ENCODE measurements at regions of chr5 and their contacts with region 1.

Region 1: GRCh38 chr5:113068559-113068958 is 92.0 kb downstream of the DCP2 start:
- DNase-seq: no peak
- H3K4me3 ChIP-seq: no peak overlapping the region
- H3K27ac ChIP-seq: no peak overlapping the region
- H3K4me1 ChIP-seq: no peaks in the 10 kb centered on the region
- H3K27me3 ChIP-seq: no peaks in the 10 kb centered on the region
- CTCF ChIP-seq: no peak

Region 2: DNA sequence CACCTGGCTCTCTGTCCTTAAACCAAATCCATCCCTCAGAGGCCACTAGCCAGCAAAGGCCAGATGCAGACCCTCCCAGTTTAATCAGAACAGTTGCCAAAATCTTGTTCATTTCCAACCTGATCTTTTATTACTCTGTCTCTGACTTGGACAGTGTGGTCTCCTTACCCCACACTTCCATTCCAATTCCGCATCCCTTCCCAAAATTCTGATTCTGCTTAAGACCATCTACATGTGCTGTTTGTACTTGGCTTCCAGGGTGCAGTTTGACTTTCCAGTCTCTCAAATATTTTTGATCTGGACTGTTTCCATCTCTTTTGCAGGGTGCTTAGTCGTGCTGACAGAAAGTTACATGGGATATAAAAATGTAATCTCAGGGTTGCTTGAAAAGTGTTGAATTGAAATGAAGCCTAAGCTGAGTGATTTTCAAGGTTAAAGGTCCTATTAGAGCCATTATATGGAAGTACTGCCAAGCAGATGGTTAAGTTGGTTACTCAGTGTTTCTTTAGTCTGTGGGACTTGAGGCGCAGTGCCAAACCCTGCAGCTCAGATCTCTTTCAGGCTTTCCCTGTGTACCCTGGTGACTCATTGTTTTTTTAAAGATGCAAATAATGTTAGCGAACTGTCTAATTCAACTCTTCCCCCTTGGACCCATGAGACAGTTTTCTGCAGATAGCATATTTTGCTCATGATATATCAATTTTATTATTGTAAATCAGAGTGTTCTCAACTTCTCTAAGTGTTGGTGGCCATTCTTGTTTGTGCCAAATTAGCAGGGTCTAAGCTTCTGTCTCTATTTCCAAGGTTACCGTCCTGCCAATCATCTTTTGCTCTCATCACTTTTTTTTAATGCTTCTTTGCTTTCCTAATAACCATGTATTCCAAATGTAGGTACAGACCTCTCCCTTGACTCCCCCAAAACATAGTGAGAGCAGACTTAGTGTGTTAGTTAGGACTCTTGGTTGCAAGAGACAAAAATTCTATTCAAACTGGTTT is 110.2 kb before region 1 on chr5:
- CTCF ChIA-PET with region 1: no interaction called
- POLR2A ChIA-PET with region 1: no interaction called
- intact Hi-C with region 1: no loop called
- DNase-seq: peak; percentile 66 to 93
- H3K4me3 ChIP-seq: no peak overlapping the region
- H3K27ac ChIP-seq: peak overlapping the region; percentile 63
- H3K4me1 ChIP-seq: peaks cover 46% of the 10 kb centered on the region
- H3K27me3 ChIP-seq: no peaks in the 10 kb centered on the region
- CTCF ChIP-seq: no peak

Region 3: DNA sequence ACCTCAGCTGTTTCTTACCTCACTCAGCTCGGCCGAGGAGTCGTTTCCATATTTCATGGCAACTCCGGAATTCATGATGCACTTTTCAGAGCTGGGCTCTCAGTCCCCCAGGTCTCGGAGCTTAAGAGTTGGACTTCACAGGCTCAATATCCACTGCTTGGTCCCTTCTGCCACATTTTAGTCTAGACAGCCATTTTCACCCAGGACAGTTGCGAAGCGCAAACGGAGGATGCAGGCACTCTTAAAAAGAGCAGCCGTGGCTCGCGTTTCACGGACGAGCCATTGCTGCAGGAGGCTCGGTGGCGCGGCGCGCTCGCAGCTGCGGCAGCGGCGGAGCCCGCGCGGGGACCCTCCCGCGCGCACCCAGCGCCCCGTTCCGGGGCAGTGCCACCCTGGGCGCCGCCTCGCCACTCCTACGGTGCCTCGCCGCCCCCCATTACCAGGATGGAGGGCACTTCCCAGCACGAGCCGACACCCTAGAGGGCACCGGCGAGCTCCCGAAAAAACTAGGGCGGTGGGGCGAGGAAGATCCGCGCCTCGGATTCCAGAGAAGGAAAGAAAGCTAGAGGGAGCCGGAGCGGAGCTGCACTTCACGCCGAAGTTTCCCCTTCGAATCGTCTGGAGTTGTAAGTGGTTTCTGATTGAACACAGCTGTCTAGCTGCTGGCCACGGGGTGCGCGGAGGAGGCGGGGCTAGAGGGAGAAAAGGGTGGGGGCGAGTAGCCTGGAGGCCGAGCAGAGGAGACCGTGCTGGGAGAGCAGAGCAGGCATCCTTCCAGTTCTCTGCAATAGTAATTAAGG is 226.0 kb after region 1 on chr5:
- CTCF ChIA-PET with region 1: no interaction called
- POLR2A ChIA-PET with region 1: interaction called, 19 read pairs
- intact Hi-C with region 1: no loop called
- DNase-seq: peak; percentile 69 to 70
- H3K4me3 ChIP-seq: peak overlapping the region; percentile 92
- H3K27ac ChIP-seq: no peak overlapping the region
- H3K4me1 ChIP-seq: peaks cover 12% of the 10 kb centered on the region; the same call in 1 of the 2 replicates
- H3K27me3 ChIP-seq: no peaks in the 10 kb centered on the region
- CTCF ChIP-seq: no peak